Caco-2 (cell line): ENCODE measurements at regions of chr4 and their contacts with region 1.

Region 1: DNA sequence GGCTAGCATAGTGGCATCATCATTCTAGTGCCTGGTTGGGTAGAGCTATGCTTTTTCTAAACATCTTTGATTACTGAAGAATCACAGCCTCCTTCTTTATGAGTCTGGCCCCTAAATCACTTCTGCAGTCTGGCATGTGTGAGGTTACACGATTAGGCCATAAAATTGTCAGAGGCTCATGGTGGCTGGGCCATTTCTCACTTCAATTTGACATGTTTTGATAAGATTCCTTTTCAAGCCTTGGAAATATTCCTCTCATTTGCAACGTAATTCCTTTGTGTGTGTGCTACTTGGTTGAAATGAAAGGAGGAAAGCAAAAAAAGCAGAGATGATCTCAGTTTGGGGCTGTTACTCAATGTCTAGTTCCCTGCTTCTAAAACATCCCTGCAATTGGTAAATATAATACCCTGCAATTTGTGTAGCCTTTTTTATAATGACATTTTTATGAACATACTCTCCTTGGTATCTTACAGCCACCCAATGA is 6.2 kb downstream of the CCKAR start:
- DNase-seq: peak; percentile 27 to 49
- H3K4me3 ChIP-seq: no peak overlapping the region
- H3K4me3 Mint-ChIP-seq: no peak overlapping the region
- H3K27ac Mint-ChIP-seq: no peak overlapping the region
- H3K4me1 ChIP-seq: peaks cover 33% of the 10 kb centered on the region
- H3K4me1 Mint-ChIP-seq: peaks cover 7% of the 10 kb centered on the region
- H3K27me3 ChIP-seq: no peaks in the 10 kb centered on the region
- H3K27me3 Mint-ChIP-seq: no peaks in the 10 kb centered on the region
- CTCF ChIP-seq: no peak

Region 2: DNA sequence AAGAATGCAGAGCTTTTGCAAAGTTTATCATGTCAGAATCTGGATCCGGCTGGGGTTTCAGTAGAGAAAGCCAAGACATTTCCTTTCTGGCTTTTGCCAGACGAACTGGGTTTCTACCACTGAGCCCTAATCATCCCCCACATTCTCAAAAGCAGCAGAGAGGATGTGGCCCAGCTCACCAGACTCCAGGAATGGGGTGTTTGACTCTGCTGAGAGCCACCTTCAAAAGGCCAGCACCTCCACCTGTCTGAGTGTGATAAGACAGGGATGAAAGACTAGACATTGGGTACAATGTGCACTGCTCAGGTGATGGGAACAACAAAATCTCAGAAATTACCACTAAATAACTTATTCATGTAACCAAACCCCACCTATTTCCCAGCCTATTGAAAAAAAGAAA is 31.9 kb after region 1 on chr4:
- CTCF ChIA-PET with region 1: no interaction called
- POLR2A ChIA-PET with region 1: no interaction called
- intact Hi-C with region 1: loop called (anchors 2 kb)
- DNase-seq: no peak
- H3K4me3 ChIP-seq: no peak overlapping the region
- H3K4me3 Mint-ChIP-seq: no peak overlapping the region
- H3K27ac Mint-ChIP-seq: no peak overlapping the region
- H3K4me1 ChIP-seq: peaks cover 6% of the 10 kb centered on the region; the same call in 1 of the 2 replicates
- H3K4me1 Mint-ChIP-seq: peaks cover 17% of the 10 kb centered on the region
- H3K27me3 ChIP-seq: no peaks in the 10 kb centered on the region
- H3K27me3 Mint-ChIP-seq: no peaks in the 10 kb centered on the region
- CTCF ChIP-seq: no peak